ENCODE measurements at regions of chrX and their contacts with region 1.

Region 1: DNA sequence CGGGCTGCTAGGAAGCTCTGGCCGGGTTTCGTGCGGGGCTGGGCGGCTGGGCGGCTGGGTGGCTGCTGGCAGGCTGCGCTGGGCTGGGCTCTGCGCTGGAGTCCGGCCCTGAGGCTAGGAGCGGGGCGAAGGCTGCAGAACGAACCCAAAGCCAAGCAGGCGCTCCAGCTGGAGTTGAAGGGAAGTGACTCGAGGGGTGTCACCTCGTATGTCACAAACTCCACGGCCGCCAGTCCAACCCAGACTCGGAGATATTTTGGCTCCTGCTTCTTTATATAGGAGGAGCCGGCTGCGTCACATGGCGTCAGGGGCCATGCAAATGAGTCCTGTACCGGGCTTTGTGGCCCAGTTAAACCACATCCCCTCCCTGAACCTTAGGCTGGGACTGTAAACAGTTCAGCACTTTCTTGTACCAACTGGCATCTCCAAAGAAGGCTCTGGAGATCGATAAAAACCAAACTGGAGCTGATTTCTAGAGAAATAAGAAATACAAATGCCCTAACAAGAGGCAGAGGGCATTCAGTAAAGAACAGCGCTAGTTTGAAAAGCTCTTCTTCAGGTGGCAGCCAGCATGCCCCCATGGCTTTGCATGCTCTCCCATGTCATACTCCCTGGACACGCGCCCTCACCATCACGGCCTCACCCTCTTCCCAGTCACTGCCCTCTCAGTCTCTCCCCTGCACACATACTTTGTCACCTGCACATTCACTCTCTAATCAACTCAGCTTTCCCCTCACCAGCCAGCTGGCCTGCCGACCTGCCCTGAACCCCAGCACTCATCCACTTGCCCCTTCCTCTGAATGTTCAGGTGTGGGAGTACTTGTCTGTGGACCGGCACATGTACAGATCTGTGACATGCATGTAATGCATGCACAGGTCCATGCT is 58.5 kb downstream of the TSC22D3 start:
- DNase-seq: peak; percentile 86
- H3K4me3 ChIP-seq: peak overlapping the region; percentile 66 to 82
- H3K27ac ChIP-seq: peak overlapping the region; percentile 86 to 88
- H3K4me1 ChIP-seq: peaks cover 4% of the 10 kb centered on the region
- H3K27me3 ChIP-seq: no peaks in the 10 kb centered on the region
- CTCF ChIP-seq: no peak
- POLR2A ChIP-seq: peak; percentile 77

Region 2: GRCh38 chrX:107776649-107777535 is 59.8 kb after region 1 on chrX:
- intact Hi-C with region 1: loop called (anchors 10 kb)
- DNase-seq: peak; percentile 92
- H3K4me3 ChIP-seq: peak overlapping the region; percentile 46 to 61
- H3K27ac ChIP-seq: peak overlapping the region in 1 of 2 donors; percentile 75
- H3K4me1 ChIP-seq: no peaks in the 10 kb centered on the region
- H3K27me3 ChIP-seq: no peaks in the 10 kb centered on the region
- CTCF ChIP-seq: peak; percentile 54 to 78 (median 74)
- POLR2A ChIP-seq: no peak

Region 3: GRCh38 chrX:107804427-107804826 is 87.4 kb after region 1 on chrX:
- intact Hi-C with region 1: no loop called
- DNase-seq: no peak
- H3K4me3 ChIP-seq: no peak overlapping the region
- H3K27ac ChIP-seq: no peak overlapping the region
- H3K4me1 ChIP-seq: no peaks in the 10 kb centered on the region
- H3K27me3 ChIP-seq: no peaks in the 10 kb centered on the region
- CTCF ChIP-seq: no peak
- POLR2A ChIP-seq: no peak

Measured in testis (tissue), 5 donors.